Panc1 (cell line): ENCODE measurements at regions of chr5 and their contacts with region 1.

Region 1: DNA sequence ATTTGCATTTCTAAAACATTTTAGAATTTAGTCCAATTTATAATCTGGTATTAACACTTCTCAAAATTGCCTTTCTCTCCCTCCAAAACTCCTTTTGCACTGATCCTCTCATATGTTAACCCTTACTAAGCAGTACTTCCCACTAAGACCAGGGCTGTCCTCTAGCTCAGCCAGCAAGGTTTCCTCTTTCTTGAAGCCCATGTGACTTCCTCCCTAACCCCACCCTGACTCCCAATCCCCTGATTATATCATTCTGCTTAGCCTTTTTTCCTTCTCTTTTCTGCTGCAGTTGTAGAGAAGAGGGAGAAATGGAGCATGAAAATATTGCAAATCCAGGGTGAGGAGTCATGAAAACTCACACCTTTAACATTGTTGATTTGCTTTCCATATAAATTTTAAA is 241.7 kb downstream of the MCTP1 start:
- DNase-seq: no peak
- ATAC-seq: no peak
- H3K4me3 ChIP-seq: no peak overlapping the region
- H3K27ac ChIP-seq: no peak overlapping the region
- H3K4me1 ChIP-seq: peaks cover 20% of the 10 kb centered on the region
- H3K27me3 ChIP-seq: no peaks in the 10 kb centered on the region
- CTCF ChIP-seq: no peak

Region 2: GRCh38 chr5:95081500-95081960 is 38.3 kb after region 1 on chr5:
- CTCF ChIA-PET with region 1: interaction called, 14 read pairs
- POLR2A ChIA-PET with region 1: interaction called, 6 read pairs
- in situ Hi-C with region 1: no loop called
- intact Hi-C with region 1: no loop called
- DNase-seq: peak; percentile 94
- ATAC-seq: peak; percentile 97
- H3K4me3 ChIP-seq: peak overlapping the region; percentile 63 to 73
- H3K27ac ChIP-seq: peak overlapping the region; percentile 97
- H3K4me1 ChIP-seq: peaks cover 35% of the 10 kb centered on the region
- H3K27me3 ChIP-seq: no peaks in the 10 kb centered on the region
- CTCF ChIP-seq: no peak

Region 3: DNA sequence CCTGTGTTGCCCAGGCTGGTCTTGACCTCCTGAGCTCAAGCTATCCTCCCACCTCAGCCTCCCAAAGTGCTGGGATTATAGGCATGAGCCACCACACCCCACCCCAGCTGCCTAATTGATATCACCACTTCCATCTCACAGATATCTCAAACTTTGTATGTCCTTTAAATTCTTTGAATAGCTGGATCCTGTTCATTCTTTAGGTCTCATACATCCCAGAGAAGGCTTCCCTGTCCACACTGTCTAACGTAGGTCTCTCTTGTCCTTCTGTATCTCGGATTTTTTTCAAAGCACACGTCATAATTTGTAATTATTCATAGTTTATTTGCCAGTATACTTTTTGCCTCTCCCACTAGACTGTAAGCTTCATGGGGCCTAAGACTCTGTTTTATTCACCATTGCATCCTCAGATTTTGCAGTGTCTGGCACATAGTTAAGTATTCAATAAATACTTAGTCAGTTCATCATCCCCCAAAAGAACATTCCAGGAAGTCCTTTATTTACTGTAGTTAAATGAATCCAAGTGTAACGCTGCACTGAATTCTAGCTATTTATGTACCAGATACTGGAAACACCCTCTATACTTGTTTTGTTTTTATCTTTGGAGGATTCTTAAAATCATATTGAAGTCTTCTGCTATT is 522.2 kb after region 1 on chr5:
- CTCF ChIA-PET with region 1: no interaction called
- POLR2A ChIA-PET with region 1: no interaction called
- in situ Hi-C with region 1: no loop called
- intact Hi-C with region 1: no loop called
- DNase-seq: no peak
- ATAC-seq: peak; percentile 63
- H3K4me3 ChIP-seq: no peak overlapping the region
- H3K27ac ChIP-seq: no peak overlapping the region
- H3K4me1 ChIP-seq: peaks cover 5% of the 10 kb centered on the region; the same call in 1 of the 2 replicates
- H3K27me3 ChIP-seq: no peaks in the 10 kb centered on the region
- CTCF ChIP-seq: no peak